ENCODE measurements at regions of chr3 and their contacts with region 1.

Region 1: GRCh38 chr3:52897130-52898122 is at the start of gene STIMATE:
- DNase-seq: peak; percentile 86 to 90 (median 88)
- H3K4me3 ChIP-seq: peak within 1 kb of the TSS; percentile 78 to 94
- H3K4me3 Mint-ChIP-seq: peak within 1 kb of the TSS; percentile 88 to 97 (median 95)
- H3K27ac ChIP-seq: peak within 1 kb of the TSS; percentile 65
- H3K27ac Mint-ChIP-seq: peak within 1 kb of the TSS; percentile 86 to 97 (median 95)
- H3K4me1 ChIP-seq: peaks cover 47% of the 10 kb centered on the region
- H3K4me1 Mint-ChIP-seq: peaks cover 39 to 53% (median 47%) of the 10 kb centered on the region in 4 donors
- H3K27me3 ChIP-seq: no peaks in the 10 kb centered on the region
- H3K27me3 Mint-ChIP-seq: no peaks in the 10 kb centered on the region
- total RNA-seq, gene STIMATE: 54.9 to 58.6 TPM

Region 2: DNA sequence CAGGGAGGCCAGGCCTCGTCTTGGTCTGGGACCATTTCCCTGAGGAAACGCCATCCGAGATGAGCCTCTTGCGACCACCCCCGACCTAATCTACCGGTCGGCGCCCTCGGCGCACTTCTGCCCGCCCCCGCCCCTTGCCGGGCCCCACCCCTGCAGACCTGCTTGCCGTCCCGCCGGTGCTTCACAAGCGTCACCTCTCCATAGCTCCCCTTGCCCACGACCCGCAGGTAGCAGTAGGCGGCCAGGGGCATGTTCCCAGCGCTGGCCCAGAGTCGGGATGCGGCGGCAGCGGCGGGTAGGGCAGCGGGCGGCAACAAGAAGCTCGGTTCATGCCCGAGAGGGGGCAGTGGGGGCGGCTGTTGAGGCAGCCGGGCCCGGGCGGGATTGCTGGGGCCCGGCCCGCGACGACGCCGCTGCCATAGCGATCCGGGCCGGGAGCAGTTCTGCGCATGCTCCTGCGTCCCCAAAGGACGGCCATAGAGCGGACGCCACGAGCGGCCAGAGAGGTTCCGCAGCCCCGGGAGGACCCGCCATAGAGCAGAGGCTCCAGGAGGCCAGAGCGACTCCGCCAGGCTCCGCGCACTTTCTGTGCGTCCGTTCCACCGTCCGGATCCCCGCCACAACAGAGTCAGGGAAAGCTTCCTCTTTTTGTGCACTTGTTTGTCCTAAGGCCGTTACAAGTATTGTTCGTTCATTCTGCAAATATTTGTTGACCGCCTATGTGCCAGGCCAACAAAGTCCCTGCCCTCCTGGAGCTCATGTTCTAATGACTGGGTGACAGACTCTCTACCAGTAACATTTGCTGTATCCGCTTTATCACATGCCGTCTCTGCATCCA is 126.7 kb before region 1 on chr3 and contains the start of gene NEK4:
- CTCF ChIA-PET with region 1: no interaction called
- POLR2A ChIA-PET with region 1: interaction called, 4 read pairs
- intact Hi-C with region 1: loop called (anchors 1 kb)
- DNase-seq: peak; percentile 72 to 84 (median 80)
- H3K4me3 ChIP-seq: peak within 1 kb of the TSS; percentile 53 to 56
- H3K4me3 Mint-ChIP-seq: peak within 1 kb of the TSS; percentile 96 to 100 (median 97)
- H3K27ac ChIP-seq: peak within 1 kb of the TSS; percentile 59
- H3K27ac Mint-ChIP-seq: peak within 1 kb of the TSS; percentile 88 to 98 (median 94)
- H3K4me1 ChIP-seq: peaks cover 17% of the 10 kb centered on the region
- H3K4me1 Mint-ChIP-seq: peaks cover 13 to 32% (median 20%) of the 10 kb centered on the region in 4 donors
- H3K27me3 ChIP-seq: no peaks in the 10 kb centered on the region
- H3K27me3 Mint-ChIP-seq: no peaks in the 10 kb centered on the region
- total RNA-seq, gene NEK4: 26.8 to 27.9 TPM

Region 3: DNA sequence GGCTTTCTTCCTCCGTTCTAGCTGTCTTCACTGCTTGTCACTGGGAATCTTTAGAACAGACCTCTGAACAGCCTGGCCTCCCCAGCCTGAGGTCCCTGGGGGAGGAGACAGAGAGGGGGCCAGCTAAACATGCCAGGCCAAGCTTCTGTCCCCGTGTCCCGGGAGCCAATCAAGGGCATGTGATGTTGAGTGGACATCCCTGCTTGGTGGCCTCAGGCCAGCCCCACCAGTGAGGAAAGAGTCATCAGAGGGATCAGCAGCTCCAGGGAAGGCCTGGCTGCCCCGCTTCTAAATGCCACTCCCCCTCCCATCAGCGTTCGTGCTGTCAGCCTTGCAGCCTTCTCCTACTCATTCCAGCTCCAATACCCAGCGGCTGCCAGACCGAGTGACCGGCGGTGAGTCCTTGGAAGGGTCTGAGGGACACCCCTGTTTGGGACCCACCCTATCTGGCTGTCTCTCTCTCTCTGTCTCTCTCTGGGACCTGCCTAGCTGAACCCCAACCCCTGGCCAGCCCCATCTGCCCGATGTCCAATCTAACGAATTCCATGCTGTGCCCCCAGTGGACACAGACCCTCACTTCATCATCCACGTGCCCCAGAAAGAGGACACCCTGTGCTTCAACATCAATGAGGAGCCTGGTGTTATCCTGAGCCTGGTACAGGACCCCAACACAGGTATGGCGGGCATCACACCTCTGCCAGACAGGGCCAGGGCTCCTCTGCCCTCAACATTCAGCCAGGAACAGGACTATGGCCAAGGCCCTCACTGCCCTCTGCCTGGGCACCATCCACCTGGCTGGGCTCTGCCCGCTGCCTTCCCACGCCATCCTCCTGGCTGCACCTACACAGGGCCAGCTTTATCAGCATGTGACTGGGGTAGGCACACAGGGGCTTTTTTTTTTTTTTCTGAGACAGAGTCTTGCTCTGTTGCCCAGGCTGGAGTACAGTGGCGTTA is 109.5 kb before region 1 on chr3:
- CTCF ChIA-PET with region 1: no interaction called
- POLR2A ChIA-PET with region 1: no interaction called
- intact Hi-C with region 1: no loop called
- DNase-seq: no peak
- H3K4me3 ChIP-seq: no peak overlapping the region
- H3K4me3 Mint-ChIP-seq: no peak overlapping the region
- H3K27ac ChIP-seq: no peak overlapping the region
- H3K27ac Mint-ChIP-seq: no peak overlapping the region
- H3K4me1 ChIP-seq: no peaks in the 10 kb centered on the region
- H3K4me1 Mint-ChIP-seq: no peaks in the 10 kb centered on the region
- H3K27me3 ChIP-seq: no peaks in the 10 kb centered on the region
- H3K27me3 Mint-ChIP-seq: peaks cover 1 to 3% of the 10 kb centered on the region in 2 donors

Region 4: GRCh38 chr3:52845691-52846431 is 51.6 kb before region 1 on chr3:
- CTCF ChIA-PET with region 1: interaction called, 16 read pairs
- POLR2A ChIA-PET with region 1: no interaction called
- intact Hi-C with region 1: loop called (anchors 5 kb)
- DNase-seq: peak in 2 of 5 donors; percentile 9 to 12
- H3K4me3 ChIP-seq: no peak overlapping the region
- H3K4me3 Mint-ChIP-seq: no peak overlapping the region
- H3K27ac ChIP-seq: no peak overlapping the region
- H3K27ac Mint-ChIP-seq: peak overlapping the region in 1 of 7 donors; percentile 77
- H3K4me1 ChIP-seq: no peaks in the 10 kb centered on the region
- H3K4me1 Mint-ChIP-seq: peaks cover 0 to 5% (median under 1%) of the 10 kb centered on the region in 4 donors
- H3K27me3 ChIP-seq: no peaks in the 10 kb centered on the region
- H3K27me3 Mint-ChIP-seq: no peaks in the 10 kb centered on the region

Region 5: GRCh38 chr3:52880474-52880873 is 17.0 kb before region 1 on chr3:
- CTCF ChIA-PET with region 1: interaction called, 11 read pairs
- POLR2A ChIA-PET with region 1: interaction called, 6 read pairs
- intact Hi-C with region 1: no loop called
- DNase-seq: no peak
- H3K4me3 ChIP-seq: no peak overlapping the region
- H3K4me3 Mint-ChIP-seq: no peak overlapping the region
- H3K27ac ChIP-seq: no peak overlapping the region
- H3K27ac Mint-ChIP-seq: no peak overlapping the region
- H3K4me1 ChIP-seq: peaks cover 7% of the 10 kb centered on the region
- H3K4me1 Mint-ChIP-seq: peaks cover 13 to 37% (median 21%) of the 10 kb centered on the region in 4 donors
- H3K27me3 ChIP-seq: no peaks in the 10 kb centered on the region
- H3K27me3 Mint-ChIP-seq: no peaks in the 10 kb centered on the region